AG04450 (cell line): ENCODE measurements at regions of chr13 and their contacts with region 1.

Region 1: DNA sequence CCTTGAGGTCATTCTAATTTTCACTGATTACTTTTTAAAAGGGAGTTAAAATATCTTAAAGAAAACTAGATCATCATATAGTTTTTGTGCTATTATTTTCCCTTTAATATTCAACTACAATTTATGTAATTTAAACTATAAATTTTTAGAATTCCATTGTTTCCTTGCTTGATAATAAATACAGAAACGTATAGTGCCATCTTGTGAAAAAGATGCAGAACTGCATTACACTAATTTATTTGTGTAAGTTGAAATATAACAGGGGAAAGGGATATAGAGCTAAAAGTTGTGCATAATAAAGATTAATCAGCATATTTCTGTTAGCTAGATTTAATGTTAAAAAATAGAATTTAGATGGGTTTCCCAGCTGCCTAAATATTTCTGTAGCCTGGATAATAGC is 61.5 kb upstream of the TDRD3 start:
- DNase-seq: no peak
- H3K4me3 ChIP-seq: no peak overlapping the region
- H3K27ac ChIP-seq: no peak overlapping the region
- H3K27me3 ChIP-seq: no peaks in the 10 kb centered on the region
- CTCF ChIP-seq: peak; percentile 62

Region 2: DNA sequence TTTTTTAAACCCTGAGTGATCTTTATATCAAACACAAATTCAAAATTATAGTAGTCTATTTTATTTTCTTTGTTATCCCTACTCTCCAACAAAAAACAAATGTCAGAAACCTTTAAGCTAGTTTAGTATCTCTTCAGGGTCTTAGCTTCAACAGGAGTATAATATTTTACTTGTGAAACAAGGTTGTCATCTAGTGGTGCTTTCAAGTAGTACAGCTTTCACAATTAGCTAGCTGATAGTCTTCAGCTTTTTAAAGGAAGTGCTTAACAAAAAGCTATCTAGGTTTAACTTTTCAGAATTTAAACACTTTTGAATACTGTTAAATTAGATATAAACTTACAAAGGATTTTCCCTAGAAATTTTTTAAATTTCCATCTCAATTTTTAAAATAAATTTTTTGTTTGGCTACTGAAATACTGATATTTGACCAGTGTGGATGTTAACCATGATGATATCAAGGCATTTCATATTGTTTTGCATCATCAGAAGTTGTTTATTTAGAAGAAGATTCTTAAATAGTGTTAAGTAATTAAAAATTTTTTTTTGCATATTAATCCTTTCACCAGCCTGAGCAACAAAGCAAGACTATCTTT is 95.7 kb after region 1 on chr13:
- CTCF ChIA-PET with region 1: interaction called, 14 read pairs
- POLR2A ChIA-PET with region 1: no interaction called
- DNase-seq: peak; percentile 21
- H3K4me3 ChIP-seq: no peak overlapping the region
- H3K27ac ChIP-seq: no peak overlapping the region
- H3K27me3 ChIP-seq: no peaks in the 10 kb centered on the region
- CTCF ChIP-seq: peak; percentile 96

Region 3: DNA sequence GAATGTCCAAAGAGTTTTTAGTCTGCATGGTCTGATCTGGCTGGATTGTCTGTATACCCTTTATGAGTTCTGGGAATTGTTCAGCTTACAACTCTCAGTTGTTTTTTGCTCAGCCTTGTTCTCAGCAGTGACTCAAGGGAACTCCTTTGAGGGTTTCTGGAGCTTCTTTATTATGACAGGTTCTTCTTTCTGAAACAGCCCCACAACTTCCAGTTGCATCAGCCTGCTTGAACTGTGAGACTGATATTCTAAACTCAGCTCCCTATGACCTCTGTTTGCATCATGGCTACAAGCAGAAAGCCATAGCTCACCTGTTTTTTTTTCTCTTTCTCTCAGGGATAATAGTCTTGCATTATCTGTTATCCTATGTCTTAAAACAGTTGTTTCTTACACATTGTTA is 146.5 kb after region 1 on chr13:
- CTCF ChIA-PET with region 1: interaction called, 14 read pairs
- POLR2A ChIA-PET with region 1: no interaction called
- DNase-seq: no peak
- H3K4me3 ChIP-seq: no peak overlapping the region
- H3K27ac ChIP-seq: no peak overlapping the region
- H3K27me3 ChIP-seq: no peaks in the 10 kb centered on the region
- CTCF ChIP-seq: no peak